ENCODE measurements at regions of chr16 and their contacts with region 1.

Region 1: DNA sequence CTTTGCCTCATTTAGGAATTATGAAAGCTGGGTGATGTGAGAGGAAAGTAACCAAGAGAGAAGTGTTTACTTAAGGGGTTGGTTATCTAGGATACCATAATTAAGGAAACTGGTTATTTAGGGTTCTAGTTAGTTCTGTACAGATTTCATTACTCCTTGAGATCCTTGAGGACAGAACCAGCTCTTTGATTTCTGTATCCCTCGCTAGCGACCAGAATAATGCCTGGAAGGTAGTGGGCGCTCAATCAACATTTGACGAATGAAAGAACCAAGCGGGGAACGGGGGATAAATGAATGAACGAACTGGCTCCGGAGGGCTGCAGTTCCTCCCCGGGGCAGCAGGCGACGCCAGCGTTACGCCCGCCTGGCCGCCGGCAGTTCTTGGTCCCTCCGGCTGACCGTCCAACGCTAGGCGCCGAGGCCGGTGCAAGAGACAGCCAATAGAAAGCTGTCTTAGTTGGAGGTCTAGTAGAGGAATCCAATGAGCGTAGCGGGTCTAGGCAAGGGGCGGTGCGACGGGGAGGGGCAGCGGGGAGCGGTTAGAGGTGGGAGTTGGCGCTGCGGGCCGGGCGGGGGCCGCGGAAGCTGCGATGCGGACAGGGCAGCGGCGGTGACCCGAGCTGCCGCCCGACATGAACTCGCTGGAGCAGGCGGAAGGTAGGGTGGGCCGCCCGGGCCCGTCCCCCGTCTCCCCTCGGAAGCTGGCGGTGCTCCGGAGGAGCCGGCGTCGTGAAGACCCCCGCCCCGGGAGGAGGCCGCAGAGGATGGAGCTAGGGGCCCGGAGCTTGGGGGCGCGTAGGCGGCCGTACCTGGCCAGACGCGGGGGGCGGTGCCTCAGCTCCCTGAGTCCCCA is at the start of gene CNEP1R1:
- DNase-seq: peak; percentile 96
- H3K4me3 ChIP-seq: peak within 1 kb of the TSS; percentile 85
- H3K27ac ChIP-seq: peak within 1 kb of the TSS; percentile 63 to 79
- H3K4me1 ChIP-seq: peaks cover 20% of the 10 kb centered on the region
- H3K27me3 ChIP-seq: no peaks in the 10 kb centered on the region
- CTCF ChIP-seq: peak; percentile 100
- POLR2A ChIP-seq: peak; percentile 23
- total RNA-seq, gene CNEP1R1: 51.5 to 64.1 TPM

Region 2: GRCh38 chr16:50210266-50211038 is 185.5 kb after region 1 on chr16:
- intact Hi-C with region 1: loop called (anchors 10 kb)
- DNase-seq: peak; percentile 93
- H3K4me3 ChIP-seq: no peak overlapping the region
- H3K27ac ChIP-seq: peak overlapping the region in 1 of 2 donors; percentile 11
- H3K4me1 ChIP-seq: peaks cover 24% of the 10 kb centered on the region
- H3K27me3 ChIP-seq: no peaks in the 10 kb centered on the region
- CTCF ChIP-seq: peak; percentile 52 to 76 (median 63)
- POLR2A ChIP-seq: no peak

Region 3: GRCh38 chr16:50281964-50282538 is 257.1 kb after region 1 on chr16:
- intact Hi-C with region 1: no loop called
- DNase-seq: peak; percentile 58
- H3K4me3 ChIP-seq: no peak overlapping the region
- H3K27ac ChIP-seq: peak overlapping the region; percentile 44 to 71
- H3K4me1 ChIP-seq: no peaks in the 10 kb centered on the region
- H3K27me3 ChIP-seq: no peaks in the 10 kb centered on the region
- CTCF ChIP-seq: no peak
- POLR2A ChIP-seq: no peak

Region 4: DNA sequence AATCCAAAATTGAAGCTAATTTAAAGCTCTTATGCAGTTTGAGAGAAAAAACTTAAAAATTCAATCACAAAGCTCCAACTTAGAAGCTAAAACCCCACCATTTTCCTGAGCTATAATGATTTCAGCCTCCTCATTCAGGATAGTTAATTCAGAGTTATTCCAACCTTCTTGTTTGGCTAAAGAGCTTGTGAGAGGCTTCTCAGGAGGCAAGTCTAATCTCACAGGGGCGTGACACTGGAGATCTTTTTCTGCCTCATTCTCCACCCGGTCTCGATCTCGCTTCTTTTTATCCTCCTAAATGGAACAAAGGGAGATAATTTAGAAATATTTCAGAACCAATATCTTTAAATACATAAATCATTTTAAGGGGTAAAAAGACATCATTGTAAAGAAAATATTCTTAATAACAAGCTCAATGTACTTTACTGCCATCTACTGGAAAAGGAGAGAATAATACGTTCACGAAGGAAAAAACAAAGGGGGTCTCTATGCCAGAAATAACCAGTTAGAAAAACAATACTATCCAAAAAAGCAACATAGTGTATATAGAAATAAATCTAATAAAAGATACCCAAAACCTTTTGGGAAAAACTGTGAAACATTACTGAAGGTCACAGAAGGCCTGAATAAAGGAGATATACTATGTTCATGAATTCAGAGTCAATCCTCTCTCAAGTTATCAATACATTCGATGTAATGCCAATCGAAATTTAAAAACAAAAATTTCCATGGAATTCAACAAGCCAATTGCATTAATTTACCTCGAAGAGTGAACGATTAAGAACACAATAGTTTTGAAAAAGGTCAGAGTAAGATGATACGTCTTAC is 329.9 kb after region 1 on chr16:
- intact Hi-C with region 1: loop called (anchors 5 kb)
- DNase-seq: no peak
- H3K4me3 ChIP-seq: no peak overlapping the region
- H3K27ac ChIP-seq: no peak overlapping the region
- H3K4me1 ChIP-seq: no peaks in the 10 kb centered on the region
- H3K27me3 ChIP-seq: no peaks in the 10 kb centered on the region
- CTCF ChIP-seq: peak in 1 of 3 experiments; percentile 61
- POLR2A ChIP-seq: no peak